IMR-90 (cell line): ENCODE measurements at regions of chr2 and their contacts with region 1.

Region 1: DNA sequence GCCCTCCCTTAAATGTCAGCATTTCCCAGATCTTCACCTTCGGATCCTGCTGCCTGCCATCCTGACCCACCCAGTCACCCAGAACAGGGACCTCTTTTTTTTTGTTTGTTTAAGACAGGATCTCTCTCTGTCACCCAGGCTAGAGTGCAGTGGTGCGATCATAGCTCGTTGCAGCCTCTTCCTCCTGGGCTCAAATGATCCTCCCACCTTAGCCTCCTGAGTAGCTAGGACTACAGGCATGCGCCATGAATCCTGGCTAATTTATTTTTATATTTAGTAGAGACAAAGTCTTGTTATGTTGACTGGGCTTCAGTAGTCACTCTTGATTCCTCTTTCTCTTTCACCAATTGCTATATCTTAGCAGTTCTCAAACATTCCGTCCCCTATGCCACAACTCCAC is 39.0 kb downstream of the INSIG2 start:
- DNase-seq: no peak
- ATAC-seq: no peak
- H3K4me3 ChIP-seq: no peak overlapping the region
- H3K27ac ChIP-seq: no peak overlapping the region
- H3K4me1 ChIP-seq: peaks cover 2% of the 10 kb centered on the region; the same call in 1 of the 2 replicates
- H3K27me3 ChIP-seq: peaks cover 2% of the 10 kb centered on the region; the same call in 1 of the 2 replicates
- CTCF ChIP-seq: no peak
- POLR2A ChIP-seq: no peak
- RAD21 ChIP-seq: no peak

Region 2: GRCh38 chr2:118169359-118170007 is 42.2 kb after region 1 on chr2:
- CTCF ChIA-PET with region 1: no interaction called
- POLR2A ChIA-PET with region 1: no interaction called
- dilution Hi-C with region 1: no loop called
- in situ Hi-C with region 1: no loop called
- intact Hi-C with region 1: loop called (anchors 1 kb)
- DNase-seq: no peak
- ATAC-seq: no peak
- H3K4me3 ChIP-seq: no peak overlapping the region
- H3K27ac ChIP-seq: no peak overlapping the region
- H3K4me1 ChIP-seq: no peaks in the 10 kb centered on the region
- H3K27me3 ChIP-seq: no peaks in the 10 kb centered on the region
- CTCF ChIP-seq: no peak
- POLR2A ChIP-seq: no peak
- RAD21 ChIP-seq: no peak